Activated CD8-positive, alpha-beta T cell treated with anti-CD3 and anti-CD28 coated beads for 36 hours (primary cell): ENCODE measurements at regions of chr15 and their contacts with region 1.

Region 1: GRCh38 chr15:68924866-68925560 is 5.3 kb upstream of the SPESP1 start:
- DNase-seq: peak; percentile 83
- ATAC-seq: no peak
- H3K4me3 Mint-ChIP-seq: no peak overlapping the region
- H3K27ac Mint-ChIP-seq: no peak overlapping the region
- H3K4me1 Mint-ChIP-seq: no peaks in the 10 kb centered on the region
- H3K27me3 Mint-ChIP-seq: peaks cover 19% of the 10 kb centered on the region
- CTCF ChIP-seq: peak; percentile 76

Region 2: DNA sequence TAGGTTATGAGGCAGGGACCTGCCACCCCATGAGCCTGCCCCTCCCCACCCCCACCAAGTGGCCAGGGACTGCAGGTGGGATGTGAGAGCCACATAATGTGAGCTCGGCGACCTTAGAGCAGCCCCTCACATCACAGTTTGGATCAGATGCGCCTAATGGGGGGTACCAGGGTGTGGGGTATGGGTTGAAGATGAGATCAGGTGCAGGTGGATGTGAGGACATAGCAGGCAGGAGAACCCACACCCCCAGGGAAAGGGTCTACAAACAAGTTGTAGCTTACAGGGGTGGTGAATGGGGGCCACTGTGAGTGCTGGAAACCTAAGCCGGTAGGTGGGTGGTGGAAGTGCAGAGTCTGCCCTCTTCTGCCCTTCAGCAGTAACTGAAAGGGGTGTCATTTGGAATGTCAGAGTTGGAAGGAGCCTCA is 252.2 kb before region 1 on chr15:
- CTCF ChIA-PET with region 1: interaction called, 12 read pairs
- POLR2A ChIA-PET with region 1: no interaction called
- intact Hi-C with region 1: no loop called
- DNase-seq: no peak
- ATAC-seq: no peak
- H3K4me3 Mint-ChIP-seq: no peak overlapping the region
- H3K27ac Mint-ChIP-seq: no peak overlapping the region
- H3K4me1 Mint-ChIP-seq: peaks cover 3% of the 10 kb centered on the region
- H3K27me3 Mint-ChIP-seq: peaks cover 7% of the 10 kb centered on the region
- CTCF ChIP-seq: no peak

Region 3: GRCh38 chr15:68909601-68910100 is 15.4 kb before region 1 on chr15:
- CTCF ChIA-PET with region 1: interaction called, 13 read pairs
- POLR2A ChIA-PET with region 1: no interaction called
- intact Hi-C with region 1: no loop called
- DNase-seq: no peak
- ATAC-seq: no peak
- H3K4me3 Mint-ChIP-seq: no peak overlapping the region
- H3K27ac Mint-ChIP-seq: no peak overlapping the region
- H3K4me1 Mint-ChIP-seq: no peaks in the 10 kb centered on the region
- H3K27me3 Mint-ChIP-seq: peaks cover 8% of the 10 kb centered on the region
- CTCF ChIP-seq: no peak